ENCODE measurements at regions of chr17 and their contacts with region 1.

Region 1: DNA sequence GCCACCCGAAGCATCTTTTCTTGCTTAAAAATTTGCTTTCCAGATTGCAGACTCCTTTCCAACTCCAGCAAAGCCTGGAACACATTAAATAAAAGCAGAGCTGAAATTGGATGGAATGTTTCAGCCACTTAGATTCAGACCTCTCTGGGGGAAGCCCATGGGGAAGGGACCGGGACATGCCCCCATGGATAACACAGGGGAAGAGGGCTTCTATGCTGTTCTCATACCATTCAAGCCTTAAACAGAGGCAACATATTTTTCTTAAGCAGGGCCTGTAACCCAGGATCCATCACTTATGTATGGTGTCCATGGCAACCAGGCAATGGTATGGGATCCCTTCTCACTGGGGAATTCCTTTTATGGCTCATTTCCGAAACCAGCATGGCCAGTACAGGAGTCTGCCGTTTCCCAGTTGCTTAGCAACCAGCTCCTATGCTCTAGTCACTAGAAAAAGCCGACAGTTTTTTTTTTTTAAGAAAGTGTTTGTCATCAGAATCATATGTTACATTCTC is 62.0 kb upstream of the MARCHF10 start:
- DNase-seq: peak in 1 of 2 donors; percentile 49
- H3K4me3 ChIP-seq: no peak overlapping the region
- H3K27ac ChIP-seq: no peak overlapping the region
- H3K4me1 ChIP-seq: no peaks in the 10 kb centered on the region
- H3K27me3 ChIP-seq: no peaks in the 10 kb centered on the region
- CTCF ChIP-seq: no peak
- POLR2A ChIP-seq: no peak

Region 2: DNA sequence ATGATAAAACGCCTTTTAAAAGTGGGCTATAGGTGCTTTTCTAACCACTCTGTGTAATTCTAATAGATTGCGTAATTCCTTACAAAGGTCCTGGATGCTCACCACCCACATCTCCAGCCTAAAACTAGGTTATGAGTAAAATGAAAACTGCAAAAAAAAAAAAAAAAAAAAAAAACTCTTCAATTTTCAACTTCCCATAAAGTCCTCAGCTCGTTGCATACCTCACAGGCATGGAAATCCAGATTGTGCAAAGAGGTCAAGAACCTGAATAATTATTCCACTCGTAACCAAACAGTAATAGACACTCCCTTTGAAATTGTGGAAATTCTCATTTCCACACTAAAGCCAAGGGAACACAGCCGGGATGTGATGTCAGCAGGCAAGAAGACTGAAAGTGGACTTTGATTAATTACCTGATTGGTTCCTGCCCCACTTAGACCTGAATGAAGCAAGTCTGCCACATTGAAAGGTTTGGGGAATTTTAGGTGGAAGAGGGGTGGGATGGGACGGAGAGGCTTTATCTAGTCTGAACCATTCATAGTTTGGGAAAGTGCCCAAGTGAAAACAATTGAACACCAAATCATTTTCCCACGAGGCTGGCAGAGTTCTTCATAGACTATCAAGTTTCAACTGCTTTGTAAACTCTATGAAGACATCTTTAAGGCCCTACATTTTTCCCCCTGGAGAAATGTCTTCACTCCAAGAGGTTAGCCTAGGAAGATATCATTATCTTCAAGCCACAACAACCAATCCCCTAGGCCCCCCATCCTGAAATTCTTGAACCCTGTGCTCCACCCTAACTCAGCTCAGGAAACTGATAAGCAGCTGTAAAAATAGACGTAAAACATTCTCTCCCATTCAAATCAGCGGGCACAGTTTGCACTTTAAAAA is 46.8 kb after region 1 on chr17:
- intact Hi-C with region 1: loop called (anchors 2 kb)
- DNase-seq: peak in 1 of 2 donors; percentile 86
- H3K4me3 ChIP-seq: no peak overlapping the region
- H3K27ac ChIP-seq: no peak overlapping the region
- H3K4me1 ChIP-seq: no peaks in the 10 kb centered on the region
- H3K27me3 ChIP-seq: no peaks in the 10 kb centered on the region
- CTCF ChIP-seq: no peak
- POLR2A ChIP-seq: no peak

Measured in vagina (tissue), 2 donors.